ENCODE measurements at regions of chr14 and their contacts with region 1.

Region 1: GRCh38 chr14:105045710-105046326 is 19.4 kb downstream of the GPR132 start:
- DNase-seq: peak; percentile 94
- H3K4me3 ChIP-seq: no peak overlapping the region
- H3K27ac ChIP-seq: no peak overlapping the region
- H3K4me1 ChIP-seq: peaks cover 0 to 4% (median 1%) of the 10 kb centered on the region in 4 donors
- H3K27me3 ChIP-seq: no peaks in the 10 kb centered on the region
- CTCF ChIP-seq: peak; percentile 99 to 100 (median 99)
- EP300 ChIP-seq: no peak
- POLR2A ChIP-seq: no peak

Region 2: GRCh38 chr14:104768437-104769323 is 277.1 kb before region 1 on chr14:
- intact Hi-C with region 1: loop called (anchors 10 kb)
- DNase-seq: peak; percentile 94
- H3K4me3 ChIP-seq: no peak overlapping the region
- H3K27ac ChIP-seq: peak overlapping the region; percentile 12 to 55 (median 48)
- H3K4me1 ChIP-seq: peaks cover 0 to 10% (median 9%) of the 10 kb centered on the region in 4 donors
- H3K27me3 ChIP-seq: no peaks in the 10 kb centered on the region
- CTCF ChIP-seq: peak; percentile 75 to 91 (median 80)
- EP300 ChIP-seq: no peak
- POLR2A ChIP-seq: no peak

Region 3: DNA sequence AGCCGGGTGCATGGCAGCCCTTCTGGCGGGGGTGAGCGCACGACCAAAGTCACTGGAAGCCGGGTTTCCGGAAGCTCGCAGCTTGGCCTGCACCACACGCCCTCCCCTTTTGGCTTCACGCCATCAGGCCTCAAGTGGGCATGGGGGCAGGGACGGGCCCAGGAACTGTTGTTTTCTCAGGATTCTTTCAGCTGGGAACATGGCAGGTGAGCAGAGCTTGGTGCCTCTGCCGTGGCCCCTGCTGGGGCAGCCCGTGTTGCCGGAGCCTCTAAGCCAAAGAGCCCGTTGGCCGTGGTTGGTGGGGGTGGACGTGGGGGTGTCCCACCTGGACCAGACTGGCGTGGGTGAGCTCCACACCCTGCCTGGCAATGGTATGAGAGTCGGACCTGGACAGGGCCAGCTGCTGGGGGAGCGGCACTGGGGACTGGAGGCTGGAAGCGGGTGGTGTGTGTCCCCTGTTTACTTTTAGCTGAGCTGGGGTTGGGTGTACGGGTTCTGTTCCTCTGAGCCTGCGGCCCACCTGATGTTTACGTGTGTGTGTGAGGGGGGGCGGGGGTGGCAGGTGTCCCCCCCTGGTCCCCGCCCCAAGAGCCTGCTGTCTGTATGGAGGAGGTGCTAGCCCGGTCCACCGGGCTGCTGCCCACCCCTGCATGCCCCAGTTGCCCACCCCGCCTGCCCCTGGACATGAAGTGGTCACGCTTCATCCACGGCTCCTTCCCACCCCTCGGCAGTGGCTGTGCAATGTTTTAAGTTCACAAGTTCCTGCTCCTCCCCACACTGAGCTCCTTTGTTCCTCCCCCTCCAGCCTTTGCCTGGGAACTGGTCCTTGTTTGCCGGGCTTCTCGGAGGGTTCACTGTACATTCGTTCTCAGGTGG is 149.8 kb before region 1 on chr14:
- intact Hi-C with region 1: loop called (anchors 1 kb)
- DNase-seq: peak; percentile 65
- H3K4me3 ChIP-seq: no peak overlapping the region
- H3K27ac ChIP-seq: peak overlapping the region in 1 of 4 donors; percentile 20
- H3K4me1 ChIP-seq: peaks cover 0 to 20% (median 18%) of the 10 kb centered on the region in 4 donors
- H3K27me3 ChIP-seq: no peaks in the 10 kb centered on the region
- CTCF ChIP-seq: no peak
- EP300 ChIP-seq: no peak
- POLR2A ChIP-seq: no peak

Region 4: GRCh38 chr14:104932676-104933631 is 112.9 kb before region 1 on chr14:
- intact Hi-C with region 1: loop called (anchors 1 kb)
- DNase-seq: peak; percentile 95
- H3K4me3 ChIP-seq: peak overlapping the region; percentile 50 to 72 (median 61)
- H3K27ac ChIP-seq: peak overlapping the region; percentile 65 to 83 (median 76)
- H3K4me1 ChIP-seq: peaks cover 0 to 23% (median 20%) of the 10 kb centered on the region in 4 donors
- H3K27me3 ChIP-seq: no peaks in the 10 kb centered on the region
- CTCF ChIP-seq: peak; percentile 43 to 83 (median 60)
- EP300 ChIP-seq: no peak
- POLR2A ChIP-seq: no peak

Region 5: GRCh38 chr14:104976198-104977007 is 69.4 kb before region 1 on chr14:
- intact Hi-C with region 1: loop called (anchors 1 kb)
- DNase-seq: peak; percentile 92
- H3K4me3 ChIP-seq: peak overlapping the region in 1 of 4 donors; percentile 67
- H3K27ac ChIP-seq: peak overlapping the region; percentile 90 to 97 (median 96)
- H3K4me1 ChIP-seq: peaks cover 0 to 91% (median 86%) of the 10 kb centered on the region in 4 donors
- H3K27me3 ChIP-seq: no peaks in the 10 kb centered on the region
- CTCF ChIP-seq: peak; percentile 92 to 94 (median 92)
- EP300 ChIP-seq: no peak
- POLR2A ChIP-seq: no peak

Region 6: GRCh38 chr14:105010891-105011291 is 34.9 kb before region 1 on chr14:
- intact Hi-C with region 1: loop called (anchors 1 kb)
- DNase-seq: peak; percentile 94
- H3K4me3 ChIP-seq: no peak overlapping the region
- H3K27ac ChIP-seq: peak overlapping the region in 3 of 4 donors; percentile 68 to 82 (median 77)
- H3K4me1 ChIP-seq: peaks cover 0 to 35% (median 30%) of the 10 kb centered on the region in 4 donors
- H3K27me3 ChIP-seq: no peaks in the 10 kb centered on the region
- CTCF ChIP-seq: no peak
- EP300 ChIP-seq: peak in 3 of 4 donors; percentile 51 to 87 (median 53)
- POLR2A ChIP-seq: no peak

Region 7: DNA sequence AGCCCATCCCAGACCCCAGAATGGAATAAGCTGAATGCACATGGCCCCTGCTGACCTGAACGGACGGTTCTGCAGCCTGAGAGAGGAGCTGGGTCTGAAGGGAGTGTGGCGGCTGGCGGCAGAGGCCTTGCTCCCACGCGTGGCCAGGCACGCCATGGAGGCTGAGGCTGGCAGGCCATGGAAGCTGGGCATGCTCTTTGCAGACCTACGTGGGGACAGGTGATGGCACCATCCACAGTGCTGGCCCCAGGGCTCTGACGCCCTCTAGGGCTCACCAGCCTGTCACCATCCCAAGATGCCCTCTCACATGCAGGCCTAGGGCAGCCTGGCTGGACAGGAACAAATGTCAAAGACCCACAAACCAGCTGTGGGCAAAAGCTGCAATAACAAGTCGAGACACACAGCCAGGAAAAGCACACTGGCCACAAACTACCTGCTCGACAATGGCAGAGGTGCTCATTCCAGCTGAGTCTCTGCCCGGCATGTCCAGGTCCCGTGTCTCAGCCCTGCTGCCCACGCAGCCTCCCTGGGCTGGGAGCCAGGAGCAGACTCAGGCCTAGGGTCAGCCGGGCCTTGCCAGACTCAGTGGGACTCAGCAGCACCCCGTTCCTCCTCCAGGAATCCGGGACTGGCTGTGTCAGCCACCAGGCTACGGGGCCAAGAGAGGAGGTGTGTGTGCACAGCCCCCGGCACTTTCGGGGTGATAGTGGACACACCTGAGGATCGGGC is 222.2 kb after region 1 on chr14:
- intact Hi-C with region 1: no loop called
- DNase-seq: no peak
- H3K4me3 ChIP-seq: no peak overlapping the region
- H3K27ac ChIP-seq: no peak overlapping the region
- H3K4me1 ChIP-seq: no peaks in the 10 kb centered on the region
- H3K27me3 ChIP-seq: no peaks in the 10 kb centered on the region
- CTCF ChIP-seq: no peak
- EP300 ChIP-seq: no peak
- POLR2A ChIP-seq: no peak

Measured in sigmoid colon (tissue), 7 donors.